ENCODE measurements at regions of chr4 and their contacts with region 1.

Region 1: DNA sequence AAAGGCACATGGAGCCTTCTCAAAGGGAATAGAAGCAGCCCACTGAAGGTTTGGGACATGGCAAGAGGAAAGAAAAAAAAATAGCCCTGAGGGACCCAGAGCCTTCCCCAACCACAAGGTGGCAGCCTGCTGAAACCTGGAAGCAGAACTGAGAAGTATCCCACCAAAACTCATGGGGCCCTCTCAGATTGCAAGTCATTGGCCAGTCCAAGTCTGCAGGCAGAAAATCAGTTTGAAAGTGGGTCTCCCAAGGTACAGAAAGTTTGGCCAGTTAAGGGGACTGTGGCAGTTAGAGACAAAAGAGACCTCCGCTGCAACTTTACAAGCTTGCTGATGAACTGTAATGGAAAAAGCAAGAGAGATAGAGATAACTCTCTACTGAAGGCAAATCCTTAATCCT is 155.8 kb downstream of the ANTXR2 start:
- DNase-seq: peak; percentile 7
- H3K4me3 ChIP-seq: no peak overlapping the region
- CTCF ChIP-seq: peak; percentile 66

Region 2: DNA sequence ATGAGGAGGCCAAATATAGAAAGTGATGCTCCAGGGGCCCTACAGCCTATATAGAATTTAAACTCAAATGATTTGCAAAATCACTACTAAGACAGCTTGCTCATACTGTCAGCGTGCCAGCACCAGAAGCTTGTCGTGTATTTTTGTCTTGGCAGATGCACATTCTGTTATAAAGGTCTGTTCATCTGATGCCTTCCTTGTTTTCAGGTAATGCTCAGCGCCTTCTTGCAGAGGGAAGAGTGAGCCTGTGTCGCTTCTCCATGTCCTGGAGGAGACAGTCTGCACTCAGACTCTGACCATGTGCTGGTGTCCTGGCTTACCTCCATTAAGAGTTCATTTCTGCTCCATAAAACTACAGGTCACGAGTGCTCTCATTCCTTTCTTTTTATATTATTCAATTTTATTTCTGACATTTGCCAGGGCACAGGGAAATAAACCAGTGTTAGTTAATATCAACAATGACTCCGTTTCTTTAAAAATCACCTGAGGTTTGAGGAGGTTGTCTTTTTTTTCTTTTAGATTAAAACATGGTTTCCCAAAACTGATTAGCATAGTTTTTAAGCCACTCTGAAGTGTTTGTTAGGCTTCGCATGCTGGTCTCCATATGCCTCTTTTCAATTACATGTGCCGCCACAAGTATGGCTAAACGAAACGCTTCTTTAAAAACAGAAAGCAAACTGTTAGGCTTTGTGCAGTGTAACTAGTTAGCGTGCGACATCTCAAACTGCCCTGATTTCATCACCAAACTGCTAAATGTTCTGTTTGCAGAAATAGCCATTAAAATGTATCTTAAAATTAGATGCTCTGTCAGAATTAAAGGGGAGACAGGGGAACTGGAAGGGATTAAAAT is 294.0 kb before region 1 on chr4:
- CTCF ChIA-PET with region 1: no interaction called
- POLR2A ChIA-PET with region 1: no interaction called
- DNase-seq: no peak
- H3K4me3 ChIP-seq: no peak overlapping the region; the same call in 1 of the 2 replicates
- CTCF ChIP-seq: no peak

Region 3: DNA sequence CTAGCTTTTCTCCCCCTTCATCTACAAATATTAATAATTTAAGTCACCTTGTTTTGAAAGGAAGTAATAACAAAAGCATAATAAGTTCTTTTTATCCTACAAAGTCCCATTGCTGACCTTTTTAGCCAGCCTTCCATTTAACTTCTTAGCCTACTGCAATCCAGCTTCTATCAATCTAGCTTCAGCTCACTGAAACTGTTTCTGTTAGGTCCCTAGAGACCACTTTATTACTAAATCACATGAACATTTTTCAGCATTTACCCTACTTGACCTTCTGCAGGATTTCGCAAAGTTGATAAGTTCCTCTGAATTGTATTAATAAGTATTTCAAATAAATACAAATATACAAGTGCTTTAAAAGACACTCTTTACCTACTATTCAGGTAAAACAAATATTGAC is 30.7 kb before region 1 on chr4:
- CTCF ChIA-PET with region 1: no interaction called
- POLR2A ChIA-PET with region 1: no interaction called
- DNase-seq: no peak
- H3K4me3 ChIP-seq: no peak overlapping the region
- CTCF ChIP-seq: no peak

Region 4: DNA sequence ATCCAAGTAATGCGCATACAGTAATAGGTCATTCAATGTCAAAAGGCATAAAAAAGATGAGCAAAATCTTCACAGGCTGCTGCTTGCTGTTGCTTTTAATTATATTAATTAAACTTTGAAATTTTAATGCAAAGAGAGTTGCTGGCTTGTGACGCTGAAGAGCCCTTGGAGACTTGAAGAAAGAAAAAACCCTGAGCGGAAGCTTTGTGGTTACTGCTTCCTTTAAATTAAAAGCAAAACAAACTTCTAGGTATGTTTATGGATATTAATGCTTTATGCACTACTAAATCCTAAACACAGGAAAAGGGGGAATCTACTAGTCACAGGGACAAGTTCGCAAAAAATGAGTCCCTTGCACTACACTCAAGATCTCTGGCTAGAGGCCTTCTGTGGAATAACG is 10.9 kb before region 1 on chr4:
- CTCF ChIA-PET with region 1: interaction called, 13 read pairs
- POLR2A ChIA-PET with region 1: no interaction called
- DNase-seq: no peak
- H3K4me3 ChIP-seq: no peak overlapping the region
- CTCF ChIP-seq: no peak

Region 5: GRCh38 chr4:79935274-79935673 is 18.0 kb after region 1 on chr4:
- CTCF ChIA-PET with region 1: interaction called, 10 read pairs
- POLR2A ChIA-PET with region 1: no interaction called
- DNase-seq: no peak
- H3K4me3 ChIP-seq: no peak overlapping the region
- CTCF ChIP-seq: no peak

Measured in AG04449 (cell line).